Left lung (tissue), 14 donors: ENCODE measurements at regions of chr12 and their contacts with region 1.

Region 1: DNA sequence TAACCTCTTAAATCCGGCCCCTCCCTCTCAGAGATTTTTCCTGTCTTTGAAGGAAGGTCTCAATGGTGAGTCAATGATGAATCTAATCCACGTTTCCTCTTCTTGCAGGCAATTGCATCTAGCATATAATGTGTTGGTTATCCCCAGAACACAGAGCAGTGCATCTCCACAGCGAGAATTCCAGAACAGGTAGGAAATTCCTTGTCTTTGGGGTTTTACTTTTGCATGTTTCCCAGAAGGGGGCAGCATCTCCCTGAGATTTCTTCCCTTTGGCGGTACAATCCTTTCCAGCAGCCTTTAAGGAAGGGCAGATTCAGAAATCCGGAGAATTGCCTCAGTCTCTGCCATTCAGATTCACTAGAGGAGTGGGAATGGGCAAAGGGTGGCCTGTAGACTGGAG is 128.0 kb downstream of the KCNA5 start:
- DNase-seq: peak in 2 of 4 donors; percentile 38 to 59
- ATAC-seq: peak; percentile 73
- H3K4me3 ChIP-seq: no peak overlapping the region
- H3K27ac ChIP-seq: no peak overlapping the region
- H3K4me1 ChIP-seq: no peaks in the 10 kb centered on the region
- H3K27me3 ChIP-seq: peaks cover 0 to 18% of the 10 kb centered on the region in 2 donors
- CTCF ChIP-seq: peak; percentile 26 to 29

Region 2: GRCh38 chr12:5442251-5443006 is 270.7 kb after region 1 on chr12:
- intact Hi-C with region 1: loop called in 1 of 2 experiments (anchors 10 kb)
- DNase-seq: peak in 1 of 4 donors; percentile 71
- ATAC-seq: peak; percentile 79
- H3K4me3 ChIP-seq: no peak overlapping the region
- H3K27ac ChIP-seq: no peak overlapping the region
- H3K4me1 ChIP-seq: no peaks in the 10 kb centered on the region
- H3K27me3 ChIP-seq: peaks cover 0 to 47% of the 10 kb centered on the region in 2 donors
- CTCF ChIP-seq: peak; percentile 33 to 34